Gastrocnemius medialis (tissue), 4 donors: ENCODE measurements at regions of chr12 and their contacts with region 1.

Region 1: GRCh38 chr12:107101651-107102050 is 8.3 kb upstream of the CRY1 start:
- DNase-seq: no peak
- ATAC-seq: no peak
- H3K4me3 ChIP-seq: no peak overlapping the region
- H3K27ac ChIP-seq: no peak overlapping the region
- H3K4me1 ChIP-seq: no peaks in the 10 kb centered on the region
- H3K27me3 ChIP-seq: no peaks in the 10 kb centered on the region
- CTCF ChIP-seq: no peak
- POLR2A ChIP-seq: no peak

Region 2: DNA sequence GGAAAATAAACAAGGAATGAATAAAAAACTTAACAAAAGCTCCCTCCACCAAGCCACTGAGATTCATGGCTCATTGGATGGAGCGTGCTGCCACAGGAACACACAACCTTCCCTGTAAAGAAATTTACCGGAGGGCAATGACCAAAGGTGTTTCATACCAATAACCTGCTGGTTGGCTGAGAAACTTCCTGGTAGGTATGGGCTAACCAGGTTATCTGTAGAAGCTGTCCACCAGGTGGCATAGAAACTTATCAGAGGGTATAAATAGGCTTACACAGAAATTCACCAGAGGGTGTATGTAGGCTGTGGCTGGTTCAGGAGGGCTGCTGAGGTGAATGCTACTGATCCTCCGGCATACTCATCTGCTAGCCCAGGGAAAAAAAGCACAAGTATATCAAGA is 87.6 kb before region 1 on chr12:
- in situ Hi-C with region 1: no loop called
- intact Hi-C with region 1: loop called (anchors 5 kb)
- DNase-seq: no peak
- ATAC-seq: peak; percentile 42 to 78
- H3K4me3 ChIP-seq: no peak overlapping the region
- H3K27ac ChIP-seq: no peak overlapping the region
- H3K4me1 ChIP-seq: peaks cover 0 to 5% of the 10 kb centered on the region in 2 donors
- H3K27me3 ChIP-seq: no peaks in the 10 kb centered on the region
- CTCF ChIP-seq: peak in 2 of 5 experiments; percentile 13 to 31
- POLR2A ChIP-seq: no peak